CD4-positive, alpha-beta T cell (primary cell): ENCODE measurements at regions of chr4 and their contacts with region 1.

Region 1: GRCh38 chr4:16001484-16001858 is 38.5 kb upstream of the FGFBP2 start:
- DNase-seq: peak in 13 of 14 experiments; percentile 10 to 76 (median 29)
- ATAC-seq: peak; percentile 86
- H3K4me3 ChIP-seq: no peak overlapping the region
- H3K4me3 Mint-ChIP-seq: no peak overlapping the region
- H3K27ac ChIP-seq: no peak overlapping the region
- H3K27ac Mint-ChIP-seq: no peak overlapping the region
- H3K4me1 ChIP-seq: peaks cover 4% of the 10 kb centered on the region
- H3K4me1 Mint-ChIP-seq: no peaks in the 10 kb centered on the region
- H3K27me3 ChIP-seq: peaks cover 4 to 7% of the 10 kb centered on the region in 2 experiments
- H3K27me3 Mint-ChIP-seq: no peaks in the 10 kb centered on the region
- CTCF ChIP-seq: peak; percentile 69

Region 2: GRCh38 chr4:14984448-14984847 is 1017.0 kb before region 1 on chr4:
- CTCF ChIA-PET with region 1: no interaction called
- POLR2A ChIA-PET with region 1: no interaction called
- intact Hi-C with region 1: no loop called
- DNase-seq: no peak
- ATAC-seq: no peak
- H3K4me3 ChIP-seq: no peak overlapping the region
- H3K4me3 Mint-ChIP-seq: no peak overlapping the region
- H3K27ac ChIP-seq: no peak overlapping the region
- H3K27ac Mint-ChIP-seq: no peak overlapping the region
- H3K4me1 ChIP-seq: no peaks in the 10 kb centered on the region
- H3K4me1 Mint-ChIP-seq: no peaks in the 10 kb centered on the region
- H3K27me3 ChIP-seq: peaks cover 0 to 6% of the 10 kb centered on the region in 2 experiments
- H3K27me3 Mint-ChIP-seq: peaks cover 19% of the 10 kb centered on the region
- CTCF ChIP-seq: no peak

Region 3: DNA sequence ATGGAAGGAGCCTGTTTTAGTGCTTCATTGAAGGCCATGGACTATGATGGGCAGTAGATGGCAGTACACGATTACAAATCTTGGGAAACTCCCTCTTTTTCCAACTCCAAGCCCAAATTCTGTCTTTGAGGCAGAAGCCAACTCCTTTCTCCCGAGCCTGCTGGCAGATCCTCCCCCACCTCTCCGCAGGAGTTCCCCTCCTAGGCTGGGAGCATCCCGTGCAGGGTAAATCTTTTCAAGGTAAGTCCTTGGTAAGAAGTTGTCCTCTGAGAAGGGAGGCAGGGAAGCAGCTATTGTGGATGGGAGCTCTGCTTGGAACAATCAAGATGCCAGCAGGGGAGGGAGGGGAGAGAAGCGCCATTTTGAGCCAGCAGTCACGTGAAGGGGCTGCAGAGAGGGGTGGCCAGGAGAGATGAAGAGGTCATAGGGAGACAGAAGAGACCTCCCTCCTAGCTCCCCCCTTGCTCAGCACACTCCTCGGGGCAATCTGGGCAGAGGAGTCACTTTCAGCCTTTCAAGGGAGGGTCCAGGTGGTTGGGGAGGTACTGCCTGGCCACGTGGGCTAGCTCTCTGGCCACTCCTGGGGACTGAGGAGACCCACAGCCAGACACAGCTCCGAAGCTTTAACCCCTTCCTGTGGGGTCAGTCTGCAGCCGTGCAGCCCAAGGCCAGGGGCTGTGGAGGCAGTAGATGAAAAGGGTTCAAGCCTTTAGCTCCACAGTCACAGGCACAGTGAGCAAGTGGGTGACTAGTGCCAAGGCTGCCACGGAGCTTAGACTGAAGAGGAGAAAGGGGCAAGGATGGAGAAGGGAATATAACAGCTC is 522.2 kb before region 1 on chr4:
- CTCF ChIA-PET with region 1: no interaction called
- POLR2A ChIA-PET with region 1: no interaction called
- intact Hi-C with region 1: loop called in 1 of 2 experiments (anchors 2 kb)
- DNase-seq: peak in 3 of 14 experiments; percentile 17 to 41 (median 33)
- ATAC-seq: no peak
- H3K4me3 ChIP-seq: no peak overlapping the region
- H3K4me3 Mint-ChIP-seq: no peak overlapping the region
- H3K27ac ChIP-seq: no peak overlapping the region
- H3K27ac Mint-ChIP-seq: no peak overlapping the region
- H3K4me1 ChIP-seq: no peaks in the 10 kb centered on the region
- H3K4me1 Mint-ChIP-seq: no peaks in the 10 kb centered on the region
- H3K27me3 ChIP-seq: no peaks in the 10 kb centered on the region
- H3K27me3 Mint-ChIP-seq: no peaks in the 10 kb centered on the region
- CTCF ChIP-seq: no peak

Region 4: GRCh38 chr4:15729910-15730533 is 271.4 kb before region 1 on chr4:
- CTCF ChIA-PET with region 1: no interaction called
- POLR2A ChIA-PET with region 1: no interaction called
- intact Hi-C with region 1: loop called (anchors 1 kb)
- DNase-seq: peak in 9 of 14 experiments; percentile 7 to 71 (median 12)
- ATAC-seq: peak; percentile 66
- H3K4me3 ChIP-seq: no peak overlapping the region
- H3K4me3 Mint-ChIP-seq: no peak overlapping the region
- H3K27ac ChIP-seq: no peak overlapping the region
- H3K27ac Mint-ChIP-seq: no peak overlapping the region
- H3K4me1 ChIP-seq: peaks cover 3% of the 10 kb centered on the region
- H3K4me1 Mint-ChIP-seq: peaks cover 14% of the 10 kb centered on the region
- H3K27me3 ChIP-seq: no peaks in the 10 kb centered on the region
- H3K27me3 Mint-ChIP-seq: no peaks in the 10 kb centered on the region
- CTCF ChIP-seq: peak; percentile 95

Region 5: DNA sequence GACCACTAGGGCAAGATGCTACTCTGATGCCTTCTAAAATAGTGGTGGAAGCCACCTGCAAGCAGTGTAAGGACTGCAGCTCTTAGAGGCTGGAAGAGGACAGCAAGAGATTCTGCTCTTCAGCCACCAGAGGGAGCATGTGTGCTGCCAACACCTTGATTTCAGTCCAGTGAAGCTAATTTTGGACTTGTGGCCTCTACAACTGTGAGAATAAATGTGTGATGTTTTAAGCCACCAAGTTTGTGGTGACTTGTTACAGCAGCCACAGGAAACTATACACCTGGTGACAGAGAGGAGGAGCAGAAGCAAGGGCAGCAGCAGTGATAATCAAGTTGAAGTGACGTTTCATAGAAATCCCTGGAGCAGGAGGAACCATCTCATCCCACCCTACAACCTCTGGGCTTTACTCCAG is 118.8 kb before region 1 on chr4:
- CTCF ChIA-PET with region 1: interaction called, 5 read pairs
- POLR2A ChIA-PET with region 1: no interaction called
- intact Hi-C with region 1: loop called (anchors 1 to 5 kb)
- DNase-seq: peak in 13 of 14 experiments; percentile 11 to 75 (median 22)
- ATAC-seq: peak; percentile 64
- H3K4me3 ChIP-seq: no peak overlapping the region
- H3K4me3 Mint-ChIP-seq: no peak overlapping the region
- H3K27ac ChIP-seq: no peak overlapping the region
- H3K27ac Mint-ChIP-seq: no peak overlapping the region
- H3K4me1 ChIP-seq: no peaks in the 10 kb centered on the region
- H3K4me1 Mint-ChIP-seq: no peaks in the 10 kb centered on the region
- H3K27me3 ChIP-seq: no peaks in the 10 kb centered on the region
- H3K27me3 Mint-ChIP-seq: peaks cover 4% of the 10 kb centered on the region
- CTCF ChIP-seq: peak; percentile 76

Region 6: GRCh38 chr4:15945516-15945915 is 56.0 kb before region 1 on chr4:
- CTCF ChIA-PET with region 1: no interaction called
- POLR2A ChIA-PET with region 1: no interaction called
- intact Hi-C with region 1: no loop called
- DNase-seq: no peak
- ATAC-seq: no peak
- H3K4me3 ChIP-seq: no peak overlapping the region
- H3K4me3 Mint-ChIP-seq: no peak overlapping the region
- H3K27ac ChIP-seq: no peak overlapping the region
- H3K27ac Mint-ChIP-seq: no peak overlapping the region
- H3K4me1 ChIP-seq: no peaks in the 10 kb centered on the region
- H3K4me1 Mint-ChIP-seq: no peaks in the 10 kb centered on the region
- H3K27me3 ChIP-seq: no peaks in the 10 kb centered on the region
- H3K27me3 Mint-ChIP-seq: no peaks in the 10 kb centered on the region
- CTCF ChIP-seq: no peak

Region 7: DNA sequence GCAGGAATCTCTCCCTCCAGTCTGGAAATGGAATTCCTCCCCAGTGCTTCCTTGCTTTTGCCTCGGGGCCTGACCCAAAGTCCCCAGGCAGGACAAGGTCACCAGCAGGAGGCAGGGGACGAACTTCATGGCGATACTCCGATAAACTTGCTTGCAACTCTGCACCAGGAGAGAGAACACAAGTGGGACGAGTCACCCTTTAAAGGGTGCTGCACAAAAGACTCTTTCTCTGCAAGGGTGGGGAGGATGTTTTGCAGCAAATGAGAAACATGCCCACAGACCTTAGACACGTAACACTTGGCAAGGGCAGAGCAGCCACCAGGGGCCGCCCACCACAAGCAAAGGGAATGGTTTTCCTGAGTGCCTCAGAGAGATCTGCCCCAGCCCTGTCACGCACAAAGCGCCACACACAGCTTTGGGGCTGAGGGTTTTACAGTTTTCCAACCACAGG is 38.4 kb before region 1 on chr4 and contains the start of gene FGFBP2:
- CTCF ChIA-PET with region 1: no interaction called
- POLR2A ChIA-PET with region 1: interaction called, 4 read pairs
- intact Hi-C with region 1: loop called (anchors 1 kb)
- DNase-seq: peak in 11 of 14 experiments; percentile 6 to 74 (median 50)
- ATAC-seq: peak; percentile 91
- H3K4me3 ChIP-seq: peak within 1 kb of the TSS; percentile 26
- H3K4me3 Mint-ChIP-seq: peak within 1 kb of the TSS; percentile 17
- H3K27ac ChIP-seq: no peak within 1 kb of the TSS
- H3K27ac Mint-ChIP-seq: no peak within 1 kb of the TSS
- H3K4me1 ChIP-seq: peaks cover 14% of the 10 kb centered on the region
- H3K4me1 Mint-ChIP-seq: peaks cover 20% of the 10 kb centered on the region
- H3K27me3 ChIP-seq: no peaks in the 10 kb centered on the region
- H3K27me3 Mint-ChIP-seq: no peaks in the 10 kb centered on the region
- CTCF ChIP-seq: no peak
- total RNA-seq, gene FGFBP2: 1.3 to 1.7 TPM